Transverse colon (tissue), 4 donors: ENCODE measurements at regions of chr12 and their contacts with region 1.

Region 1: GRCh38 chr12:19915392-19916195 is 452.7 kb upstream of the PDE3A start:
- DNase-seq: no peak
- H3K4me3 ChIP-seq: no peak overlapping the region
- H3K27ac ChIP-seq: no peak overlapping the region
- H3K4me1 ChIP-seq: peaks cover 3 to 13% (median 11%) of the 10 kb centered on the region in 4 donors
- H3K27me3 ChIP-seq: no peaks in the 10 kb centered on the region
- CTCF ChIP-seq: peak; percentile 41 to 75 (median 62)
- EP300 ChIP-seq: no peak
- POLR2A ChIP-seq: no peak

Region 2: DNA sequence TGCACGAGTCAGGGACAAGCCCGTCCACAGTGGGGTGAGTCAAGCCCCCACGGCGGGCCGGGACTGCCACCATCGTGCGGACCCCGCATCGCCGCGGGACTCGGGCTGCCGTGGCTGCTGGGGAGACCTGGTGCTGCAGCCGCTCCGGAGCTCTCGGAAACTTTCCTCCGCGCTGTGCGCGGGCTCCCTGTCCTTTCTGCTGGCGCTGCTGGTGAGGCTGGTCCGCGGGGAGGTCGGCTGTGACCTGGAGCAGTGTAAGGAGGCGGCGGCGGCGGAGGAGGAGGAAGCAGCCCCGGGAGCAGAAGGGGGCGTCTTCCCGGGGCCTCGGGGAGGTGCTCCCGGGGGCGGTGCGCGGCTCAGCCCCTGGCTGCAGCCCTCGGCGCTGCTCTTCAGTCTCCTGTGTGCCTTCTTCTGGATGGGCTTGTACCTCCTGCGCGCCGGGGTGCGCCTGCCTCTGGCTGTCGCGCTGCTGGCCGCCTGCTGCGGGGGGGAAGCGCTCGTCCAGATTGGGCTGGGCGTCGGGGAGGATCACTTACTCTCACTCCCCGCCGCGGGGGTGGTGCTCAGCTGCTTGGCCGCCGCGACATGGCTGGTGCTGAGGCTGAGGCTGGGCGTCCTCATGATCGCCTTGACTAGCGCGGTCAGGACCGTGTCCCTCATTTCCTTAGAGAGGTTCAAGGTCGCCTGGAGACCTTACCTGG is 453.9 kb after region 1 on chr12:
- in situ Hi-C with region 1: loop called in 1 of 4 experiments (anchors 25 kb)
- intact Hi-C with region 1: no loop called
- DNase-seq: peak; percentile 84
- H3K4me3 ChIP-seq: peak overlapping the region; percentile 71 to 92 (median 83)
- H3K27ac ChIP-seq: peak overlapping the region; percentile 89 to 97 (median 94)
- H3K4me1 ChIP-seq: peaks cover 0 to 28% (median 3%) of the 10 kb centered on the region in 4 donors
- H3K27me3 ChIP-seq: peaks cover 11% of the 10 kb centered on the region
- CTCF ChIP-seq: peak; percentile 21 to 58 (median 28)
- EP300 ChIP-seq: no peak
- POLR2A ChIP-seq: peak; percentile 88